ENCODE measurements at regions of chr5 and their contacts with region 1.

Region 1: GRCh38 chr5:13478831-13479465 is 465.5 kb downstream of the DNAH5 start:
- DNase-seq: peak; percentile 17 to 48
- H3K4me3 ChIP-seq: no peak overlapping the region
- H3K27ac ChIP-seq: no peak overlapping the region
- H3K4me1 ChIP-seq: 0 out of 7 replicates have a peak, but pooled peaks cover 0 to 3% (median 2%) of the 10 kb centered on the region in 4 experiments
- H3K27me3 ChIP-seq: no peaks in the 10 kb centered on the region
- CTCF ChIP-seq: peak in 2 of 3 experiments; percentile 67 to 75; a peak in 3 of 4 replicates
- EP300 ChIP-seq: no peak
- POLR2A ChIP-seq: no peak
- RAD21 ChIP-seq: peak; percentile 89 to 92

Region 2: DNA sequence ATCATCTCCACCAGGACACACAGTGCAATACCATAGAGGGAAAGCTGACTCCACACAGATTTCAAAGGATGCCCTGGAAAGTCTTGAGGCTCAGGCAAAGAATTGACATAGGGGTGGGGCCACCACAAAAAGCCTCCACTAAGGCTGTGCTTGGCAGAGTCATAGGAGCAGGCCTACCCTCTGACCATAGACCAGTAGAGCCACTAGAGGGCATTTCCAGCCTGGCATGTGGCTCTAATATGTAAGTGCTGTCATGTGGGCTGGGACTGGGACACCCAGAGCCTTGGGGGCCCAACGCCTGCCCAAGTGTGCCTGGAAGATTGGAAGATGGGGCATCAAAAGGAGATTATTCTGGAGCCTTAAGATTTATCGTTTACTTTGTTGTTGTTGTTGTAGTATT is 260.4 kb before region 1 on chr5:
- CTCF ChIA-PET with region 1: interaction called, 19 read pairs
- POLR2A ChIA-PET with region 1: no interaction called
- DNase-seq: peak in 1 of 2 experiments; percentile 5
- H3K4me3 ChIP-seq: no peak overlapping the region
- H3K27ac ChIP-seq: no peak overlapping the region
- H3K4me1 ChIP-seq: no peaks in the 10 kb centered on the region
- H3K27me3 ChIP-seq: no peaks in the 10 kb centered on the region
- CTCF ChIP-seq: peak; percentile 30 to 70 (median 56)
- EP300 ChIP-seq: no peak
- POLR2A ChIP-seq: no peak
- RAD21 ChIP-seq: peak; percentile 71 to 78

Region 3: DNA sequence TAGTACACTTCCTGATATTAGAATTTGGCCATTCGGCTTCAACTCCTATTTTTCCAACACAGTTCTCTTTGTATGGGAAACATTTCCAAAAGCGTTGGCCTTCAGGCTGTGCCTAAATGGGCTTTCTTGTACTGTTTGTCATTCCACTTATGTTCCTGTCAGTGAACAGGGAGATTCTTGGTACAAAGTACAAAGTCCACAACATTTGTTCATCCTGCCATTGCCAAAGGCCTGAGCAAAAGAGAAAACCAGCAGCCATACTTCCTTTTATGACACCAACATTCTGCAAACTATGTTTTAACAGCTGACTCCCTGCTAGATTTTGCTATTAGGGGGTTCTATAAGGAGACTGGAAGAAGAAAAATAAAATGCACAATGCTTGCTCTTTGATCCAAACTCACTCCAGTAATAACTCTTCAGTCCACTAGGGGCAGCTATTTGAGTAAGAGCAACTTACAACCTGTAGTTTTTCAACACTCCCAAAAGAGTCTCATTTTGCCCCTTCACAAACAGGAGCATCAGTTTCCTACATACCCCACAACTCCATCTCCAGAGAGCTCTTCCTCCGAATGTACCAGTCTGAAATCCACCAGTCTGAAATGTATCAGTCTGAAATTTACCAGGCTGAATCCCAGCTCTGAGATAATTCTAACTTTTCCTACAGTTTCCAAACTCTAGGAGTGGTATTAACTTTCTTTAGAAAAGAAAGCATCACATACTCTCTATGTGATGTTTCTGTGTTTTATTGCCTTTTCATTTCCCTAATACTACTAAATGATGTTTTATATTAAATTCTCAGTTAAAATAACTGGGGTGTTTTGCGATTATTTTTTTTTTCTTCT is 228.3 kb before region 1 on chr5:
- CTCF ChIA-PET with region 1: interaction called, 14 read pairs
- POLR2A ChIA-PET with region 1: interaction called, 4 read pairs
- DNase-seq: no peak
- H3K4me3 ChIP-seq: no peak overlapping the region
- H3K27ac ChIP-seq: no peak overlapping the region
- H3K4me1 ChIP-seq: peaks cover 0 to 5% (median 1%) of the 10 kb centered on the region in 4 experiments; a peak in 5 of 7 replicates
- H3K27me3 ChIP-seq: no peaks in the 10 kb centered on the region
- CTCF ChIP-seq: peak in 2 of 3 experiments; percentile 45 to 64; a peak in 2 of 4 replicates
- EP300 ChIP-seq: no peak
- POLR2A ChIP-seq: no peak
- RAD21 ChIP-seq: peak; percentile 52 to 67

Region 4: GRCh38 chr5:13464532-13465193 is 14.3 kb before region 1 on chr5:
- CTCF ChIA-PET with region 1: interaction called, 14 read pairs
- POLR2A ChIA-PET with region 1: no interaction called
- DNase-seq: no peak
- H3K4me3 ChIP-seq: no peak overlapping the region
- H3K27ac ChIP-seq: no peak overlapping the region
- H3K4me1 ChIP-seq: no peaks in the 10 kb centered on the region
- H3K27me3 ChIP-seq: peaks cover 0 to 1% (median 0%) of the 10 kb centered on the region in 4 experiments; a peak in 1 of 7 replicates
- CTCF ChIP-seq: no peak
- EP300 ChIP-seq: no peak
- POLR2A ChIP-seq: no peak
- RAD21 ChIP-seq: no peak